ENCODE measurements at regions of chr6 and their contacts with region 1.

Region 1: DNA sequence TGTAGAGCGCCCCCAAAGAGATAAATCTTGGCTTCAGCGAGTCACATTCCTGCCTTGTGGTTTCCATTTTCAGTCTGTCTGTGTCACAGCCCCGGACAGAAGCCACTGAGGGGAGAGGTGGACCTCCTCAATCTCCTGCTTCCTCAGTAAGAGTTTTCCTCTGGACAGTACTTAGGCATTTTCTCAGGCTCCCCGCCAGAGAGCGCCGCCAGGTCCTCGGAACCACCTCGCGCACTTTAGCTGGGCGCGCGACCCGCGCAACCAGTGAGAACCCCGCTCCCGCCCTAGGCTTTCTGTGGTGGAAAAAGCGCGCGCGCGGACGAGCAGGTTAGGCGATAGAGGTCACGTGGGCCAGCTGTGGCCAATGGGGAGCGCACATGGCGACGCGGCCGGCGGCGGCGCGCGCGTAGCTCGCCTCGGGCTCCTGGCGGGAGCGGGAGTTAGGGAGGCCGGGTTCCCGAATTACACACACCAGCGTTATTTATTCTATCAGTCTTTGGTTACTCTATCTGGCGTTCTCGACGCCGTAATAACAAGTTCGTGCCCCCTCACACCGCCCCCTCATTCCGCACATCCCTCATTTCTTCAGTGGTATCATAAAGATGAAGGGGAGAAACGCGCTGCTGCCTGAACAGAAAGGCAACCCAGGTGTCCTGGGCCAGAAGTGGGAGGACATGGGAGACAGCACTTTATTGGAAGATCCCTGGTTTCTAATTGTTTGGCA is 19.4 kb downstream of the PXT1 start:
- DNase-seq: peak; percentile 98 to 99
- ATAC-seq: peak; percentile 100
- H3K4me3 ChIP-seq: peak overlapping the region; percentile 15 to 67 (median 57)
- H3K27ac ChIP-seq: peak overlapping the region; percentile 3 to 85 (median 68)
- H3K4me1 ChIP-seq: peaks cover 0 to 15% (median 8%) of the 10 kb centered on the region in 9 donors
- H3K27me3 ChIP-seq: no peaks in the 10 kb centered on the region
- CTCF ChIP-seq: peak in 8 of 9 donors; percentile 58 to 81 (median 66)

Region 2: DNA sequence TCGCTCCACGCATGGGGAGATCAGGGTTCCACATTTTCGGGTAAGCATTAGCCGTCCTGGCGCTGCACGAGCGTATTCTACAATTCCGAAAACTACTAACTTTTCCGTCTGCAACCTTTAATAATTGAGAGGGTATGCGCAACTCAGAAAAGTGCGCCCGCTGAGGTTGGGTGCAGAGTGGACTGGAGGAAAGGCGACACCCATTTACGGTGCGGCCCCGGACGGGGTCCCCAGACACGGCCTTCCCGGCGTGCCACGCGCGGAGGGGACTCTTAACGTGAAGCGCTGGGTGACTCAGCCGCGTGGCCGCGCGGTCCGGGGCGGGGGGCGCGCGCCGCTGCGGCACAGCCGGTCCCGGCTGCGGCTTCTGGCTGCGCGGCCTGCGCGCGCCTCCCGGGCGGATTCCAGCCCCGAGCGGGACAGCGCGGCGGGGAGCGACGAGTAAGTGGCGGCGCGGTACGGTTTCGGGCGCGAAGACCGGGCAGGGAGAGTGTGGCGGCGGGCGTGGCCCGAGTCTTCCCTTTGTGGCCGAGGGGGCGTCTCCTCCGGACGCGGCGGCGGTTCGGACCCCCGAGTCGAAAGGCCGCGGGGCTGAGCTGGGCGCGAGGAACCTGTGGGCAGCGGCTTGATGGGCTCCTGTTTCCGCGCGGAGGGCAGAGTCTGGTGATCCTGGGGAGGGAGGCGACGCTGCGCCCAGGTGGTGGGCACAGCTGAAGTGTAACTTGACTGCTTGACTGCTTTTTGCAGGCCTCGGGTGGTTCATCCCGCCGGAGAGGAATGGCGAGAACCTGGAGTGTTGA is 19.6 kb after region 1 on chr6 and contains the starts of genes KCTD20 and PXT1:
- intact Hi-C with region 1: loop called in 3 of 10 experiments (anchors 1 kb)
- DNase-seq: peak; percentile 89 to 91
- ATAC-seq: peak; percentile 88 to 96 (median 93)
- H3K4me3 ChIP-seq: peak within 1 kb of the TSS; percentile 74 to 98 (median 94)
- H3K27ac ChIP-seq: peak within 1 kb of the TSS; percentile 96 to 100 (median 98)
- H3K4me1 ChIP-seq: peaks cover 8 to 51% (median 42%) of the 10 kb centered on the region in 9 donors
- H3K27me3 ChIP-seq: no peaks in the 10 kb centered on the region
- CTCF ChIP-seq: peak in 1 of 9 donors; percentile 2
- total RNA-seq, gene KCTD20: 21.4 to 36.6 (median 26.1) TPM
- total RNA-seq, gene PXT1: 0.18 to 0.34 (median 0.23) TPM in 5 of 10 donors, not detected in the others